Activated CD4-positive, alpha-beta memory T cell treated with anti-CD3 and anti-CD28 coated beads for 36 hours (primary cell): ENCODE measurements at regions of chr12 and their contacts with region 1.

Region 1: GRCh38 chr12:79935021-79935623 is at the start of gene PPP1R12A:
- DNase-seq: peak; percentile 97
- H3K4me3 Mint-ChIP-seq: peak within 1 kb of the TSS; percentile 85
- H3K27ac Mint-ChIP-seq: peak within 1 kb of the TSS; percentile 99
- H3K4me1 Mint-ChIP-seq: peaks cover 33% of the 10 kb centered on the region
- H3K27me3 Mint-ChIP-seq: no peaks in the 10 kb centered on the region
- total RNA-seq, gene PPP1R12A: 74.5 to 75.7 TPM

Region 2: GRCh38 chr12:79690638-79691493 is 244.3 kb before region 1 on chr12 and contains the start of gene PAWR:
- CTCF ChIA-PET with region 1: no interaction called
- POLR2A ChIA-PET with region 1: no interaction called
- intact Hi-C with region 1: loop called (anchors 2 kb)
- DNase-seq: peak; percentile 38
- H3K4me3 Mint-ChIP-seq: peak within 1 kb of the TSS; percentile 72
- H3K27ac Mint-ChIP-seq: no peak within 1 kb of the TSS
- H3K4me1 Mint-ChIP-seq: peaks cover 9% of the 10 kb centered on the region
- H3K27me3 Mint-ChIP-seq: peaks cover 48% of the 10 kb centered on the region
- total RNA-seq, gene PAWR: 4.6 to 5.3 TPM

Region 3: GRCh38 chr12:79776111-79776510 is 159.0 kb before region 1 on chr12:
- CTCF ChIA-PET with region 1: no interaction called
- POLR2A ChIA-PET with region 1: no interaction called
- intact Hi-C with region 1: no loop called
- DNase-seq: no peak
- H3K4me3 Mint-ChIP-seq: no peak overlapping the region
- H3K27ac Mint-ChIP-seq: no peak overlapping the region
- H3K4me1 Mint-ChIP-seq: no peaks in the 10 kb centered on the region
- H3K27me3 Mint-ChIP-seq: no peaks in the 10 kb centered on the region

Region 4: DNA sequence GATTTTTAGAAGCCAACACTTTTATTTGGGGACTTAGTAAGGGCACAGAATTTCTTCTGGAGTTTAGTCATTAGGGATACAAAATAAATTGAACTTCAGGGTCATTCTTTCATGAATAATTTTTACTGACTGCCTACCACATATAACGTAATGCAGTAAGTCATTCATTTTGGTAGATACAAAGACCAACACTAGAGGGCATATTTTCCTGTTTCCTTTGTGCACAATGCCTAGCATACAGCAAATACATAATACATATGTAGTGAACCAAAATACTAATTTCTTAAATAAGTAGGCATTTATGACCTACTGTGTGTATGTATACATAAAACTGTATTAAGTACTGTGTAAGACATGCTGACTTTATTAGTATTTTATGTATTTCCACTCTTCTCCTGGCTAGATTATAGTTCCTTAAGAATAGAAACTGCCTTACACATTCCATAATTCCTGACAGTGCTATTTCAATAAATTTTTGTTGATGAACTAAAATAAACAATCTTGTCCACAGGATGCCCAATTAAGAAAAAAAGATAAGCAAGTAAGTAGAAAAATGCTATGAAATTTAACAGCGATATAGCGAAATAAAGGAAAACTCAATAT is 48.1 kb before region 1 on chr12:
- CTCF ChIA-PET with region 1: interaction called, 11 read pairs
- POLR2A ChIA-PET with region 1: interaction called, 3 read pairs
- intact Hi-C with region 1: loop called (anchors 1 kb)
- DNase-seq: no peak
- H3K4me3 Mint-ChIP-seq: no peak overlapping the region
- H3K27ac Mint-ChIP-seq: no peak overlapping the region
- H3K4me1 Mint-ChIP-seq: peaks cover 59% of the 10 kb centered on the region
- H3K27me3 Mint-ChIP-seq: no peaks in the 10 kb centered on the region